PC-9 (cell line): ENCODE measurements at regions of chr11 and their contacts with region 1.

Region 1: DNA sequence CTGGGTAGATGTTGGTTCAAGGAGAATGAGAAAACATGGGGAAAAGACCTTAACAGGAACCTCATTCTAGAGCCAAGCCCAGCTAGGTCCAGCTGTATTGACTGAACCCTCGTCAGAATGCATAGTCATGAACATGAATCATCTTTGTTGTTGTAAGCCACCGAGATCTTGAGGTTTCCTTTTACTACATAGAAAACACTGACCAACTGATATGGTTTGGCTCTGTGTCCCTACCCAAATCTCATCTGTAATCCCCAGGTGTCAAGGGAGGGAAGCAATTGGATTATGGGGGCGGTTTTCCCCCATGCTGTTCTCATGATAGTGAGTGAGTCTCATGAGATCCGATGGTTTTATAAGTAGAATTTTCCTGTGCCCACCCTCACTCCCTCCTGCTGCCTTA is 19.4 kb upstream of the PHOX2A start:
- DNase-seq: no peak
- H3K4me3 ChIP-seq: no peak overlapping the region
- H3K27ac ChIP-seq: no peak overlapping the region
- H3K4me1 ChIP-seq: no peaks in the 10 kb centered on the region
- H3K27me3 ChIP-seq: no peaks in the 10 kb centered on the region
- CTCF ChIP-seq: no peak

Region 2: GRCh38 chr11:73121692-73122091 is 858.3 kb after region 1 on chr11:
- CTCF ChIA-PET with region 1: interaction called, 11 read pairs
- POLR2A ChIA-PET with region 1: no interaction called
- intact Hi-C with region 1: no loop called
- DNase-seq: no peak
- H3K4me3 ChIP-seq: no peak overlapping the region
- H3K27ac ChIP-seq: no peak overlapping the region
- H3K4me1 ChIP-seq: no peaks in the 10 kb centered on the region
- H3K27me3 ChIP-seq: no peaks in the 10 kb centered on the region
- CTCF ChIP-seq: no peak